MCF 10A (cell line): ENCODE measurements at regions of chr22 and their contacts with region 1.

Region 1: DNA sequence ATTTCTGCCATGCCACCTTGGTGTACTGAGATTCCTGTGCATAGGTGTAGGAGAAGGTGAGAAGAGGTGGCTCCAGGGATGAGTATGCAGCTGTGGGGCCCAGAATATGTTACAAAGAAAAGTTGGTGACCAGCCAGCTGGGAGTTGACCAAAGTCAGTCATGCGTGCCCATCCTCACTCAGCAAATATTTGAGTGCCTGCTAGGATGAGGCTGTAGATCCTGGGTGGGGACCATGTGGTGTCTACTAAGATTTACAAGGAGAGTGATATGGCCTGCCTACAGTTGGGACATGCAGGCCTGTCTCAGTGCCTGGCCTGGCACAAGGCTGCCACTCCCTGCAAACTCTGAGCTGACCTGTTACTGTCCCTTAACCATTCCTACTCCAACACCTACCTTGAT is 19.4 kb downstream of the RNF185 start:
- DNase-seq: peak; percentile 81
- H3K4me3 Mint-ChIP-seq: no peak overlapping the region
- H3K27ac Mint-ChIP-seq: peak overlapping the region; percentile 82
- H3K4me1 Mint-ChIP-seq: peaks cover 34% of the 10 kb centered on the region
- H3K27me3 Mint-ChIP-seq: no peaks in the 10 kb centered on the region
- CTCF ChIP-seq: no peak

Region 2: DNA sequence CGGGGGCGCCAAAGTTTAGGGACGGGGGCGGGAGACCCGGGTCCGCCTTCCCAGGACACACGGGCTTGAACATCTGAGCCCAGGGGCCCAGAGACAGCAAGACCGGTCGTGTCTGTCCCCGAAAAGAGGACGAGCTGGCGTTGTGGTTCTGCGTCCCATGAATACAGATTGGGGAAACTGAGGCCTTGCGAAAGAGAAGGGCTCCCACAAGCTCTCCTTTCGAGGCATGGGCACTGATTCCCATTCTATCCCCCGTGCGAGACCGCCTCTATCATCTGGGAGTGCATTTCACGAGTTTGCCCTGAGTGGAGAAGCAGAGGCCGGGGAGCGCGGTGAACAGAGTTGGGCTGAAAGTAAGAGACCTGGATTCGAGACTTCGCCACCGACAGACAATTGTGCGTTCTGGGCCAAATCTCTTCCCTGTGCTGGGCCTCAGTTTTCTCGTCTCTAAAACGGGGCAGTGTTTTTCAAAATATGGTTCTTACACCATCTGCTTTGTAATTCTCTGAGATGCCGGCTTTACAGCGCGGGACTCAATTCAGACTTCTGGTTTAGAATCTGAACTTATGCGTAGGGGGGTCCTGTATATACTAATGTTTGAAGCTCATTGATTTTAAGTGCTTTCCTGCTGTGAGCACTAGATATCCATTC is 18.9 kb before region 1 on chr22:
- CTCF ChIA-PET with region 1: interaction called, 12 read pairs
- POLR2A ChIA-PET with region 1: interaction called, 164 read pairs
- intact Hi-C with region 1: no loop called
- DNase-seq: no peak
- H3K4me3 Mint-ChIP-seq: peak overlapping the region; percentile 89
- H3K27ac Mint-ChIP-seq: peak overlapping the region; percentile 97
- H3K4me1 Mint-ChIP-seq: peaks cover 14% of the 10 kb centered on the region
- H3K27me3 Mint-ChIP-seq: no peaks in the 10 kb centered on the region
- CTCF ChIP-seq: no peak

Region 3: GRCh38 chr22:31206906-31207678 is 27.7 kb after region 1 on chr22:
- CTCF ChIA-PET with region 1: interaction called, 9 read pairs
- POLR2A ChIA-PET with region 1: interaction called, 20 read pairs
- intact Hi-C with region 1: no loop called
- DNase-seq: peak; percentile 42
- H3K4me3 Mint-ChIP-seq: no peak overlapping the region
- H3K27ac Mint-ChIP-seq: peak overlapping the region; percentile 75
- H3K4me1 Mint-ChIP-seq: peaks cover 16% of the 10 kb centered on the region
- H3K27me3 Mint-ChIP-seq: no peaks in the 10 kb centered on the region
- CTCF ChIP-seq: no peak